Activated T-helper 2 cell treated with anti-CD3 and anti-CD28 coated beads, Interferon-gamma antibody, Interleukin-2, Interleukin-4, amounts not matched to agents 10 μg/mL and 5 μg/mL and 100 μg/mL, durations not matched to agents 14 hours and 24 hours and 36 hours (primary cell): ENCODE measurements at regions of chr11 and their contacts with region 1.

Region 1: GRCh38 chr11:92941676-92942571 is 27.5 kb upstream of the MTNR1B start:
- DNase-seq: no peak
- H3K4me3 Mint-ChIP-seq: no peak overlapping the region
- H3K27ac Mint-ChIP-seq: no peak overlapping the region
- H3K4me1 Mint-ChIP-seq: no peaks in the 10 kb centered on the region
- H3K27me3 Mint-ChIP-seq: peaks cover 9% of the 10 kb centered on the region

Region 2: GRCh38 chr11:93067881-93068390 is 126.0 kb after region 1 on chr11:
- intact Hi-C with region 1: loop called (anchors 5 kb)
- DNase-seq: no peak
- H3K4me3 Mint-ChIP-seq: no peak overlapping the region
- H3K27ac Mint-ChIP-seq: no peak overlapping the region
- H3K4me1 Mint-ChIP-seq: no peaks in the 10 kb centered on the region
- H3K27me3 Mint-ChIP-seq: peaks cover 8% of the 10 kb centered on the region

Region 3: DNA sequence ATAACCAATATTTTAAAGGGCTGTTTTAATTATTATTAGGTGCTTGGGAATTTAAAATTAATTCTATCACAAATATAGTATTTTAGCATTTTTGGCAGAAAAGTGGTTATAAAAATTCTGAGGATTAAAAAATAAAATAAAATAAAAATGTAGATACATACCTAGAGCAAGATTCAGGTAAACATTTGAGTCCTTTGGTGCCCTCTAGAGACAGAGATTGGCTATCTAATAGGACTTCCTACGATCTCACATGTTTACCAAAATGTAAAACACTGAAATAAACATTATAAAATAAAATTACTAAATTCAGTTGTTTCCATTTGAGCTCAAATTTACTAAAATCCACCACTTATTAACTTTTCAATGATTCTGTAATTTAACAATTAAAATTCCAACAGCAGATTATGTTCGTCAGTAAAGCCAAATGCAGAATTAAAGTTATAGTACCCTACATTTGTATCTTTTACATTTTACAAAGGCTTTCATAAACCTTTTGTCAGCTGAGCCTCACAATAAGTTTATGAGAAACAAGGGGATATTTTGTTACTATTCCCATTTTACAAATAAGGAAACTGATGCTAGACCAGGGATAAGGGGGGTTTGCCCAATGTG is 228.1 kb after region 1 on chr11:
- intact Hi-C with region 1: loop called (anchors 5 kb)
- DNase-seq: no peak
- H3K4me3 Mint-ChIP-seq: no peak overlapping the region
- H3K27ac Mint-ChIP-seq: no peak overlapping the region
- H3K4me1 Mint-ChIP-seq: peaks cover 11% of the 10 kb centered on the region
- H3K27me3 Mint-ChIP-seq: no peaks in the 10 kb centered on the region

Region 4: DNA sequence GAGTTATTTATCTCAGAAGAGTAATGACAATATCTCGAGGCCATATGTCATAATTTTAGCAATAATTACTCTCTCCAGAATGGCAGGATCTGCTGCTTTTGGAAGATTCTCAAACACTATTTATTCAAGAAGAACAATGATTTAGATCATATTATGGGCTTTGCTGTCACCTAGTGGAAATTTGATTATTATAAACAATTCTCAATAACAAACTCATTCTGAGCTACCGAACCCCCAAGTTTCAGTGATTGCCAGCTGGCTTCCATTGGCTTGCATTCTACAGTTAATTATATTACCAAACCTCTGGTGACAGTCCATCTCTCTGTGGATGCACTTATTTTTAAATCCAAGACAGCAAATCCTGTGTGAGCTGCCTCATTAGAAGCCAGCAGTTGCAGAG is 283.7 kb after region 1 on chr11:
- intact Hi-C with region 1: loop called (anchors 1 kb)
- DNase-seq: no peak
- H3K4me3 Mint-ChIP-seq: no peak overlapping the region
- H3K27ac Mint-ChIP-seq: no peak overlapping the region
- H3K4me1 Mint-ChIP-seq: no peaks in the 10 kb centered on the region
- H3K27me3 Mint-ChIP-seq: peaks cover 2% of the 10 kb centered on the region

Region 5: DNA sequence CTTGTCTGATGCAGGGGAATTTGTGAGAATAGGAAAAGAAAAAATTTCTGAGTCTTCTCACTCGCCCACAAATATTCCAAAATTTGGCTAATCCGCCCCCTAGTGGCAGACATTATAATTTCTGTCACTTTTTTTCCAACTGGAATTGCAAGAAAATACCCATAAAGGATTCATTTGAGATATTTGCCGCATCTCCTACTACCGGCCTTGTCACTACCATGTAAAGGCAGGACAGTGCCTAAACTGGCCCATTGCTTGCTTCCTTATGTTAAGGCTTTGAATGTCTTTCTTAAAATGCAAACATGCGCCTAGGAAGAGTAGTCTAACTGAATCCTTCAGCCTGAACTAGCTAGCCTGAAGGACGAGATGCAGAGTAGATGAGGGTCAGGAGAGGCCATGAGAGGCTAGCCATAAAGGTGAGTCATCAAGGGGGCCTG is 710.3 kb after region 1 on chr11:
- intact Hi-C with region 1: loop called (anchors 5 kb)
- DNase-seq: no peak
- H3K4me3 Mint-ChIP-seq: no peak overlapping the region
- H3K27ac Mint-ChIP-seq: peak overlapping the region; percentile 7
- H3K4me1 Mint-ChIP-seq: peaks cover 35% of the 10 kb centered on the region
- H3K27me3 Mint-ChIP-seq: peaks cover 9% of the 10 kb centered on the region